MCF 10A (cell line): ENCODE measurements at regions of chr16 and their contacts with region 1.

Region 1: GRCh38 chr16:77660311-77660710 is 62.0 kb upstream of the NUDT7 start:
- DNase-seq: peak; percentile 53
- H3K4me3 Mint-ChIP-seq: no peak overlapping the region
- H3K27ac Mint-ChIP-seq: no peak overlapping the region
- H3K4me1 Mint-ChIP-seq: peaks cover 4% of the 10 kb centered on the region
- H3K27me3 Mint-ChIP-seq: peaks cover 55% of the 10 kb centered on the region
- CTCF ChIP-seq: peak; percentile 55

Region 2: GRCh38 chr16:77236063-77236511 is 424.2 kb before region 1 on chr16:
- CTCF ChIA-PET with region 1: interaction called, 38 read pairs
- POLR2A ChIA-PET with region 1: no interaction called
- intact Hi-C with region 1: loop called (anchors 1 kb)
- DNase-seq: peak; percentile 84
- H3K4me3 Mint-ChIP-seq: no peak overlapping the region
- H3K27ac Mint-ChIP-seq: no peak overlapping the region
- H3K4me1 Mint-ChIP-seq: peaks cover 8% of the 10 kb centered on the region
- H3K27me3 Mint-ChIP-seq: peaks cover 10% of the 10 kb centered on the region
- CTCF ChIP-seq: peak; percentile 100

Region 3: GRCh38 chr16:77437859-77438258 is 222.5 kb before region 1 on chr16:
- CTCF ChIA-PET with region 1: no interaction called
- POLR2A ChIA-PET with region 1: no interaction called
- intact Hi-C with region 1: loop called (anchors 5 kb)
- DNase-seq: peak; percentile 22
- H3K4me3 Mint-ChIP-seq: no peak overlapping the region
- H3K27ac Mint-ChIP-seq: no peak overlapping the region
- H3K4me1 Mint-ChIP-seq: no peaks in the 10 kb centered on the region
- H3K27me3 Mint-ChIP-seq: peaks cover 81% of the 10 kb centered on the region
- CTCF ChIP-seq: peak; percentile 10

Region 4: GRCh38 chr16:77599793-77600415 is 60.4 kb before region 1 on chr16:
- CTCF ChIA-PET with region 1: interaction called, 29 read pairs
- POLR2A ChIA-PET with region 1: interaction called, 3 read pairs
- intact Hi-C with region 1: loop called (anchors 1 kb)
- DNase-seq: peak; percentile 60
- H3K4me3 Mint-ChIP-seq: no peak overlapping the region
- H3K27ac Mint-ChIP-seq: no peak overlapping the region
- H3K4me1 Mint-ChIP-seq: peaks cover 6% of the 10 kb centered on the region
- H3K27me3 Mint-ChIP-seq: peaks cover 30% of the 10 kb centered on the region
- CTCF ChIP-seq: peak; percentile 65

Region 5: DNA sequence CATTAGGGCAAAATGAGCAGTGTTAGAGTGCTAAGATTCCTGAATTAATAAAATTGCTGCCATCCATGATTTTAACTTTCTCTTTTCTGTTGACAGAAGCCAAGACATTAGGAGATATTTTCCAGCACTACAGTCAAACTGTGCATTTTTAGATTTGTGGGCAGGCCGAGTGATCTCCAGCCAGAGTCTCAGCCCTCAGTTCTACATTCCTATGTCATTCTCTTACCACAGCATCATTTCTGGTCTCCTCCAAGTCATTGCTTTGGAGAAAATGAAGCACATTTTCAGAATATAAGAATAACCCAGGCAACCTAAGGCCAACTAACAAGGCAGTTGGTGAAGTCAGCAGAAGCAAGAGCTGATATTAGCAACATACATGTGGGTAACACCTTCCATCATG is 12.6 kb before region 1 on chr16:
- CTCF ChIA-PET with region 1: interaction called, 27 read pairs
- POLR2A ChIA-PET with region 1: no interaction called
- intact Hi-C with region 1: no loop called
- DNase-seq: no peak
- H3K4me3 Mint-ChIP-seq: no peak overlapping the region
- H3K27ac Mint-ChIP-seq: no peak overlapping the region
- H3K4me1 Mint-ChIP-seq: no peaks in the 10 kb centered on the region
- H3K27me3 Mint-ChIP-seq: peaks cover 34% of the 10 kb centered on the region
- CTCF ChIP-seq: no peak

Region 6: GRCh38 chr16:77696149-77696548 is 35.8 kb after region 1 on chr16:
- CTCF ChIA-PET with region 1: no interaction called
- POLR2A ChIA-PET with region 1: no interaction called
- intact Hi-C with region 1: no loop called
- DNase-seq: no peak
- H3K4me3 Mint-ChIP-seq: no peak overlapping the region
- H3K27ac Mint-ChIP-seq: no peak overlapping the region
- H3K4me1 Mint-ChIP-seq: no peaks in the 10 kb centered on the region
- H3K27me3 Mint-ChIP-seq: peaks cover 64% of the 10 kb centered on the region
- CTCF ChIP-seq: no peak